ENCODE measurements at regions of chr1 and their contacts with region 1.

Region 1: GRCh38 chr1:28056129-28056925 is 32.1 kb downstream of the EYA3 start:
- DNase-seq: no peak
- ATAC-seq: peak; percentile 95
- H3K4me3 Mint-ChIP-seq: peak overlapping the region; percentile 12
- H3K27ac Mint-ChIP-seq: peak overlapping the region; percentile 84
- H3K4me1 Mint-ChIP-seq: peaks cover 32% of the 10 kb centered on the region
- H3K27me3 Mint-ChIP-seq: no peaks in the 10 kb centered on the region
- CTCF ChIP-seq: no peak

Region 2: DNA sequence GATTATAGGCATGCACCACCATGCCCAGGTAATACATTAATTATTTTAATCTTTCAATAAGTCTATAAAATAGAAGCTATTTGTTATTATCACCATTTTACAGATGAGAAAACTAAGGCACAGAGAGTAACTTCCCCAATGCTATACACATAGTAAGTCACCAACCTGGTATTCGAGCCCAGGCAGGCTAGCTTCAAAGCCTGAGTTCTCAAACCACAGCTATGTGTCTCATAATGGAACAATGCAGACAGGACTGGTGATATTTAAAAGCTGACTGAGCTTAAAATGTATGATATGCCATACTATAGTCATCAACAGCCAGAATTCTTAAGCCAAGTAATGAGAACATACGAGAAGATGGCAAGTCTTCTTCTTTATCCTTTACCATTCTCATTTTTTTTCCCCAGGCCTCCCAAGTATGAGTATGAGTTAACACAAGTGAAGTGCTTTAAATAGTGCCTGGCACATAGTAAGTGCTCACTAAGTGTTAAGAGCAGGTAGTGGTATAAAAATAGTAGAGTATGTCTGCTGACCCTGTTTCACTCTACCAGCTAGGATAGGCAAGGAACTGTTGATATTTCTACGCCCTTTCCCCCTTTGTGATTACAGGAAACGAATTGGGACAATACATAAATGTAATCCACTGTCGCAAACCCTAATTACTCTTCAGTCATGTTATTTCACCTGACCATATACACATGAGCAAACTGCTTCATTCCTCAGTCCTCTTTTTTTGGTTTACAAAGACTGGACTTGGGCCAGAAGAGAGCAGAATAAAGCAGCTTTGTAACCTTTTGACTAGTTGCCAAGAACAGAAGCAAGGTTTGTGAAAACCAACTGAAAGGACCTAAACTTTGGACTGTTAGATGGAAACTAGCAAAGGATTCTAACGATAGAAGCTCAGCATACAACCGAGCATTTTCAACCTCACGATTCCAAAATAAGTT is 22.6 kb after region 1 on chr1:
- CTCF ChIA-PET with region 1: no interaction called
- POLR2A ChIA-PET with region 1: interaction called, 10 read pairs
- intact Hi-C with region 1: loop called (anchors 2 kb)
- DNase-seq: no peak
- ATAC-seq: no peak
- H3K4me3 Mint-ChIP-seq: no peak overlapping the region
- H3K27ac Mint-ChIP-seq: no peak overlapping the region
- H3K4me1 Mint-ChIP-seq: peaks cover 32% of the 10 kb centered on the region
- H3K27me3 Mint-ChIP-seq: no peaks in the 10 kb centered on the region
- CTCF ChIP-seq: no peak